CD4-positive, alpha-beta memory T cell (primary cell): ENCODE measurements at regions of chr21 and their contacts with region 1.

Region 1: GRCh38 chr21:17512253-17513213 is at the start of gene CXADR:
- DNase-seq: peak; percentile 81 to 84 (median 82)
- H3K4me3 ChIP-seq: peak within 1 kb of the TSS; percentile 28 to 50
- H3K4me3 Mint-ChIP-seq: peak within 1 kb of the TSS; percentile 85 to 94 (median 90)
- H3K27ac ChIP-seq: peak within 1 kb of the TSS; percentile 34
- H3K27ac Mint-ChIP-seq: peak within 1 kb of the TSS; percentile 57 to 88 (median 75)
- H3K4me1 ChIP-seq: peaks cover 18% of the 10 kb centered on the region
- H3K4me1 Mint-ChIP-seq: peaks cover 12 to 21% (median 17%) of the 10 kb centered on the region in 4 donors
- H3K27me3 ChIP-seq: no peaks in the 10 kb centered on the region
- H3K27me3 Mint-ChIP-seq: peaks cover 5 to 6% of the 10 kb centered on the region in 2 donors
- total RNA-seq, gene CXADR: 0.64 to 1.4 TPM

Region 2: GRCh38 chr21:17334484-17334883 is 178.0 kb before region 1 on chr21:
- CTCF ChIA-PET with region 1: no interaction called
- POLR2A ChIA-PET with region 1: no interaction called
- intact Hi-C with region 1: no loop called
- DNase-seq: no peak
- H3K4me3 ChIP-seq: no peak overlapping the region
- H3K4me3 Mint-ChIP-seq: no peak overlapping the region
- H3K27ac ChIP-seq: no peak overlapping the region
- H3K27ac Mint-ChIP-seq: no peak overlapping the region
- H3K4me1 ChIP-seq: no peaks in the 10 kb centered on the region
- H3K4me1 Mint-ChIP-seq: no peaks in the 10 kb centered on the region
- H3K27me3 ChIP-seq: no peaks in the 10 kb centered on the region
- H3K27me3 Mint-ChIP-seq: no peaks in the 10 kb centered on the region

Region 3: GRCh38 chr21:17387030-17387617 is 125.4 kb before region 1 on chr21:
- CTCF ChIA-PET with region 1: interaction called, 3 read pairs
- POLR2A ChIA-PET with region 1: no interaction called
- intact Hi-C with region 1: loop called (anchors 2 kb)
- DNase-seq: peak in 4 of 5 donors; percentile 48 to 63 (median 60)
- H3K4me3 ChIP-seq: no peak overlapping the region
- H3K4me3 Mint-ChIP-seq: no peak overlapping the region
- H3K27ac ChIP-seq: no peak overlapping the region
- H3K27ac Mint-ChIP-seq: no peak overlapping the region
- H3K4me1 ChIP-seq: no peaks in the 10 kb centered on the region
- H3K4me1 Mint-ChIP-seq: no peaks in the 10 kb centered on the region
- H3K27me3 ChIP-seq: no peaks in the 10 kb centered on the region
- H3K27me3 Mint-ChIP-seq: peaks cover 2 to 5% of the 10 kb centered on the region in 2 donors

Region 4: DNA sequence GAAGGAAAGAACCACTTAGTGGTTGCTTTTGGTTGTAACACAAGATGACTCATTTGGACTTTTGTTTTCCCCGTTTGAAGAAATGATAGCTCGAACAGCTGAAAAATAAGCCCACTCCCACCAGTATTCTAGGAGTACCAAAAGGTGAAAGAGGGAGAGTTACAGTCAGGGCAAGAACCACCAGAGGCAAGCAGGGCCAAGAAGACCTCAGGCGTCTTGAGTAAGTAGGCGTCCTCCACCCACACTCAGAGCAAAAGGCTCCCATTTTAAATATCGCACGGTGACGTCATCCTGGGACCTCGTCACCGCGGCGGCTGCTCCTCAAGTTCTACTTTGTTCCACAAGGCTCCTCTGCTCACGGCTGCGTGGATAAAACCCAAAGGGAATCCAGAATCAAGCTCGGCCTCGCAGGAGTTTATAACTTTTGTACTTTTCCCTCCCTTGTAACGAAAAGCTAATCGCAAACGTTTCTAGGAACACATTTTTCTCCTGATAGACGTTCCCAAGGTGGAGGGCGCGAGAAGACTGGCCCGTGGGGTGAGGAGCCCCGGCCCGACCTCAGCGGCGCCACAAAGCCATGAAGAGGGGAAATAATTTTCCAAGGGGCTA is 99.0 kb after region 1 on chr21:
- CTCF ChIA-PET with region 1: interaction called, 5 read pairs
- POLR2A ChIA-PET with region 1: interaction called, 5 read pairs
- intact Hi-C with region 1: loop called (anchors 1 kb)
- DNase-seq: peak; percentile 80 to 91 (median 84)
- H3K4me3 ChIP-seq: peak overlapping the region; percentile 87 to 97
- H3K4me3 Mint-ChIP-seq: peak overlapping the region; percentile 91 to 99 (median 95)
- H3K27ac ChIP-seq: peak overlapping the region; percentile 84
- H3K27ac Mint-ChIP-seq: peak overlapping the region; percentile 95 to 100 (median 99)
- H3K4me1 ChIP-seq: peaks cover 27% of the 10 kb centered on the region
- H3K4me1 Mint-ChIP-seq: peaks cover 17 to 50% (median 25%) of the 10 kb centered on the region in 4 donors
- H3K27me3 ChIP-seq: no peaks in the 10 kb centered on the region
- H3K27me3 Mint-ChIP-seq: no peaks in the 10 kb centered on the region